Common myeloid progenitor, CD34-positive (primary cell): ENCODE measurements at regions of chr13 and their contacts with region 1.

Region 1: DNA sequence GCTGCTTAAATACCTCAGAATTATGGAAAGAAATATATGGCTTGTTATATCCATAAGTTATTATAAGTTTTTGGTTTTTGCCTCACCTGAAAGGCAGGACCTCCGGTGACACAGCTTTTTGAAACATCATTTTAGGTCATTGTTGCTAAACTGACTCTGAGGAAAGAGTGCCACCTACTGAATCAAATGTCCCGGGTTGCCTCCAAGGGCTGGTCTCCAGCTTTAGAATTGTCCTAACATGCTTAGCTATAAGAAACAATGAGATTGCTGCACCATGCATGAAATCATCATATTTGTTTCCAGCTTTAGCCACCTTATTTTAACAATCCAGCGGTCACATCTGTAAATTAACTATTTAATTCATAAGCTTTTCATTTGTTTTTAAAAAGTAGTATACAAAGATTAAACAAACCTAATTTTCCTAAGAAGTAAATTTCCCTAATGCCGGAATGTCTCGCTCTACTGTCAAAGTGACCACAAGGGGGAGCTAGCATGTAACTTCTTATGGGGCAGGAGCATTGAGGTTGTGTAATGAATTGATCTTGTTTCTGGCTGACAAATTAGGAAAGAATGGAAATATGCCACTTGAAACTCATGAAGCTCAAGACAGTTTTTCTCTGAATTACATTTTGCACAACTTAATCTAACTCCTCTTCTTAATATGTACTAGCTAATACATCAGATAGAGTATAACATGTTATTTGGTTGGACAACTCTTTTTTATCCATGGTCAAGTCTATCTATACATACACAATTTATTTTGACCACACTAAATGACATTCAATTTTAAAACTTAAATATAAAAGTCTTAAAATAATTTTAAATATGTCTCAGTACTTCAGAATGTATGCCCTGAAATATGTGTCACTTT is 6.7 kb upstream of the PCDH17 start:
- DNase-seq: peak; percentile 56 to 64 (median 58)
- H3K4me3 ChIP-seq: no peak overlapping the region
- H3K27ac ChIP-seq: no peak overlapping the region
- H3K4me1 ChIP-seq: peaks cover 3 to 8% (median 7%) of the 10 kb centered on the region in 4 experiments
- H3K27me3 ChIP-seq: peaks cover 9 to 38% (median 28%) of the 10 kb centered on the region in 5 experiments

Region 2: GRCh38 chr13:57595775-57596174 is 29.0 kb before region 1 on chr13:
- CTCF ChIA-PET with region 1: no interaction called
- POLR2A ChIA-PET with region 1: no interaction called
- DNase-seq: no peak
- H3K4me3 ChIP-seq: no peak overlapping the region
- H3K27ac ChIP-seq: no peak overlapping the region
- H3K4me1 ChIP-seq: no peaks in the 10 kb centered on the region
- H3K27me3 ChIP-seq: no peaks in the 10 kb centered on the region

Region 3: GRCh38 chr13:59318320-59318930 is 1693.6 kb after region 1 on chr13:
- CTCF ChIA-PET with region 1: interaction called, 10 read pairs
- POLR2A ChIA-PET with region 1: no interaction called
- DNase-seq: peak; percentile 28 to 64 (median 54)
- H3K4me3 ChIP-seq: no peak overlapping the region
- H3K27ac ChIP-seq: no peak overlapping the region
- H3K4me1 ChIP-seq: no peaks in the 10 kb centered on the region
- H3K27me3 ChIP-seq: no peaks in the 10 kb centered on the region